ENCODE measurements at regions of chr1 and their contacts with region 1.

Region 1: DNA sequence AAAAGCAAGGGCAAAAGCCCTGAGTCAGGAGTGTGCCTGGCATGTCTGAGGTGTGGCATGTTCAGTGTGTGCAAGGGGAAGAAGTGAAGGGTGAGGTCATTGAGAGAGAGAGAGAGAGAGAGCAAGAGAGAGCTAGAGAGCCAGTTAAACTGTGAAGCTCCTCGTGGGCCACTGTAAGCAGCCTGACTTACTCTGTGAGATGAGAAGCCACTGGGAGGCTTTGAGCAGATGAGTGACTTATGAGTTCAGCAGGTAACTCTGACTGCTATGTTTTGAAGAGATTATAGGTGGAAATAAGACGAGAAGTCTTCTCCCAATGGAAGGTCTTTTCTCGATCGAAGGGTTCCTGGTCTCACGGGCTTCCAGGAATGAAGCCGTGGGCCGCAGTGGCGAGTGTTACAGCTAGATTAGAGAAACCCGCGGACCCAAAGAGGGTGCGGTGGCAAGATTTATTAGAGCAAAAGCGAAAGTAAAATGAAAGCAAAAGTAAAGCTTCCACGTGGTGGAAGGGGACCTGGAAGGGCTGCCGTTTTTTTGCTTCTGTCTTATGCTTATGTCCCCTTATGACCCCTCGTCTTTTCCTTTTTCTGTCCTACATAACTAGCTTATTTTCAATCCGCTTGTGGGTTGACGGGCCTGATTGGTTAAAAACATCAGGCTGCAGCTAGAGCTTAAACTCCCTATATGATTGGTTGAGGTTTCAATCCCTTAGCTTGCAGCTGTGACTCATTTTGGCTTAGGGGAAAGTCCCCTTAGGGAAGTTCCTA is 323.1 kb upstream of the FAM78B start:
- DNase-seq: no peak
- H3K4me3 ChIP-seq: no peak overlapping the region
- CTCF ChIP-seq: no peak

Region 2: GRCh38 chr1:166479052-166479631 is 10.7 kb before region 1 on chr1:
- CTCF ChIA-PET with region 1: interaction called, 16 read pairs
- POLR2A ChIA-PET with region 1: no interaction called
- DNase-seq: no peak
- H3K4me3 ChIP-seq: no peak overlapping the region
- CTCF ChIP-seq: peak; percentile 67

Region 3: GRCh38 chr1:167185974-167186657 is 696.3 kb after region 1 on chr1:
- CTCF ChIA-PET with region 1: no interaction called
- POLR2A ChIA-PET with region 1: no interaction called
- DNase-seq: no peak
- H3K4me3 ChIP-seq: no peak overlapping the region
- CTCF ChIP-seq: no peak